HEK293 (cell line): ENCODE measurements at regions of chr3 and their contacts with region 1.

Region 1: DNA sequence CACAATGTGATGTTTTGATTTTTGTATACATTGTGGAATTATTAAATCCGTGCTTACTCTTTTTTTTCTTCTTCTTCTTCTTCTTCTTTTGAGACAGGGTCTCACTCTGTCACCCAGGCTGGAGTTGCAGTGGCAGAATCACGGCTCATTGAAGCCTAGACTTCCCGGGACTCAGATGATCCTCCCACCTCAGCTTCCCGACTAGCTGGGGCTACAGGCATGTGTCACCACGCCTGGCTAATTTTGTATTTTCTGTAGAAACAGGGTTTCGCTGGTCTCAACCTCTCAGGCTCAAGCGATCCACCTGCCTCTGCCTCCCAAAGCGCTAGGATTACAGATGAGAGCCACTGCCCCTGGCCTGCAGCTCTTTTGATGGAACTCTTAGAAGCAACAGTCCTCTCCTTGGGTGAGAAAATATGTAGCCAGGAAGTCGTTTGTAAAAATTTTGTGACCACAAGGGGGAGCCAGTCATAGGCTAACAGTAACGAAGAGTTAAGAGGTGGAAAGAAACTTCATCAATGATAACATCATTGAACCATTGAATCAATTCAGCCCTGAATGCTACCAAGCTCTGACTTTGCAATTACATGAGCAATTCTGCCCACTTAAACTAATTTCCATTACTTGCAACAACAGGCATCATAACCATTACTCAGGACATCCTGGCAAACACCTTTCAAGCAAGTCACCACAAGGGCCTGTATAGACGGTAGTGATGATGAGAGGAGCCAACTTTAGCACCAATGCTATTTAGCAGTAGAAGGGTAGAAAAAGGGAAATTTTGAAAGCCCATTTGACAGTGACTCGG is 16.7 kb upstream of the CMTM7 start:
- H3K4me3 ChIP-seq: no peak overlapping the region
- H3K27ac ChIP-seq: no peak overlapping the region
- H3K4me1 ChIP-seq: no peaks in the 10 kb centered on the region
- CTCF ChIP-seq: 0 out of 2 replicates have a peak, but pooled peaks have one; percentile 20

Region 2: GRCh38 chr3:32398531-32398930 is 23.5 kb after region 1 on chr3:
- CTCF ChIA-PET with region 1: interaction called, 15 read pairs
- POLR2A ChIA-PET with region 1: no interaction called
- H3K4me3 ChIP-seq: no peak overlapping the region
- H3K27ac ChIP-seq: no peak overlapping the region
- H3K4me1 ChIP-seq: peaks cover 5% of the 10 kb centered on the region; the same call in 1 of the 2 replicates
- CTCF ChIP-seq: no peak

Region 3: GRCh38 chr3:32531010-32531647 is 156.1 kb after region 1 on chr3:
- CTCF ChIA-PET with region 1: no interaction called
- POLR2A ChIA-PET with region 1: no interaction called
- H3K4me3 ChIP-seq: no peak overlapping the region
- H3K27ac ChIP-seq: no peak overlapping the region
- H3K4me1 ChIP-seq: no peaks in the 10 kb centered on the region
- CTCF ChIP-seq: no peak

Region 4: DNA sequence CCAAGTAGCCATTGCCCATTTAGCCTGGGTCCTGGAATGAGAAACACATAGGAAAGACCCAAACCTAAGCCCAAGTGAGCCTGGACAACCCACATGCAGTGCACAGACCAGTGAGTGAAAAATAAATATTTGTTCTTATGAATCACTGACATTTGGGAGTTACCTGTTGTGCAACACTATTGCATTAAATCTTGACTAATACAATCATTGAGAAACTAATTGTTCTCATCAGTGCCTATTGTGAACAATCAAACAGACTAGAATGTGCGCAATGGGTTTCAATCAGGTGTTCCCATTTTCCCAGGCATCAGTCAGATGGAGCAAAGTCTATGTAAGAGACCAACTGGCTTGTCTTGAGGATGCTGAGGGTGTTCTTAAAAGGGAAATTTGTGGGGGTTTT is 255.3 kb after region 1 on chr3:
- CTCF ChIA-PET with region 1: no interaction called
- POLR2A ChIA-PET with region 1: no interaction called
- H3K4me3 ChIP-seq: no peak overlapping the region
- H3K27ac ChIP-seq: no peak overlapping the region
- H3K4me1 ChIP-seq: no peaks in the 10 kb centered on the region
- CTCF ChIP-seq: no peak